PC-9 (cell line): ENCODE measurements at regions of chr3 and their contacts with region 1.

Region 1: GRCh38 chr3:24272875-24273274 is 221.8 kb downstream of the THRB start:
- DNase-seq: peak in 1 of 2 experiments; percentile 86
- H3K4me3 ChIP-seq: peak overlapping the region; percentile 1; the same call in 1 of the 2 replicates
- H3K27ac ChIP-seq: peak overlapping the region; percentile 82
- H3K4me1 ChIP-seq: peaks cover 31% of the 10 kb centered on the region
- H3K27me3 ChIP-seq: no peaks in the 10 kb centered on the region
- CTCF ChIP-seq: no peak

Region 2: GRCh38 chr3:24472351-24472750 is 199.5 kb after region 1 on chr3:
- CTCF ChIA-PET with region 1: no interaction called
- POLR2A ChIA-PET with region 1: no interaction called
- intact Hi-C with region 1: no loop called
- DNase-seq: peak in 1 of 2 experiments; percentile 68
- H3K4me3 ChIP-seq: no peak overlapping the region
- H3K27ac ChIP-seq: no peak overlapping the region
- H3K4me1 ChIP-seq: peaks cover 24% of the 10 kb centered on the region
- H3K27me3 ChIP-seq: no peaks in the 10 kb centered on the region
- CTCF ChIP-seq: no peak

Region 3: DNA sequence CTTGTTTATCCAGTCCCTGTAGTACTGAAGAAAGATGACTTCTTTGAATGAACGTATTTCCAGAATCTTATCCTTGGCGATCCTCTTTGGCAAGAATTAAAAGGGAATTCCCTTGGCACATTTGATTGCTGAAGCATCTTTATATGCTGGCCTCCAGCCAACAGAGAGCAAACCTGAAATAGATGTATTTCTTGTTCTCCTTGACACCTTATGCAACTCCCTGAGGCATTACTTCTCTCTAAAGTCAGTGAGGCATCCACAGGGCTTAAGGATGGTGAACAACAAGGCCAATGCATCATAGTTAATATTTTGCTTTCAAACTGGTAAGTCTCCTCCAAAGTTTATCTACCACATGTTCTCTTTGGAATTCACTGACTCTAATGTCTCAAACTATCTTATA is 672.7 kb after region 1 on chr3:
- CTCF ChIA-PET with region 1: no interaction called
- POLR2A ChIA-PET with region 1: interaction called, 10 read pairs
- intact Hi-C with region 1: no loop called
- DNase-seq: no peak
- H3K4me3 ChIP-seq: no peak overlapping the region
- H3K27ac ChIP-seq: no peak overlapping the region
- H3K4me1 ChIP-seq: no peaks in the 10 kb centered on the region
- H3K27me3 ChIP-seq: no peaks in the 10 kb centered on the region
- CTCF ChIP-seq: no peak